Activated CD4-positive, alpha-beta T cell treated with anti-CD3 and anti-CD28 coated beads, Interleukin-2, amount 10 ng/mL, durations not matched to agents 24 days and 14 days (primary cell): ENCODE measurements at regions of chr4 and their contacts with region 1.

Region 1: DNA sequence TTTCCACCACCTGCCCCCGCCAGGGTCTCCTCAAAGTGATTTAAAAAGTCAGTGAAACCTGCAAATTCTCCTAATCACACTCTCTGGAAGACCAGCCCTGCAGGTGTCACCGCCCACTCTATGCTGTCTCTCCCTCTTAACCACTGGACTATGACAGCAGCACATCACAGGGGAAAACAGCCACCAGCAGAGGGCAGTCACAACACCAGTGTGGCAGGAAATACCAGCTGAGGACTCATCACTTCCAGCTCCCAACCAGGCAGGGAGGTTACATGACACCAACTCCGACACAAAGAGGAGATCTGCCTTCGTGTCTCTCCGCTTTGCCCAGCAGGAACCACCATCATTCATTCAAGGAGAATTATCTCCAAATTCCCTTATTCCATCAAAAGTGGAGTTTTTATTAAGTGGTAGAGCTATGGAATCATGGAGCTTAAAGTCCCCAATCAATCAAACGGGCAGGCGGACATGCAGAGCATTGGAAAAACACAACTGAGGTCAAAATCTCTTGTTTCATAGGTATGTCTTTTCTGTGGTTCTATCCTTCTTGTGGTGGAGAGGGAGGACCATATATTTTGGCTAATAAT is 91.3 kb downstream of the NSUN7 start:
- DNase-seq: peak; percentile 92
- H3K4me3 Mint-ChIP-seq: no peak overlapping the region
- H3K27ac Mint-ChIP-seq: no peak overlapping the region
- H3K4me1 Mint-ChIP-seq: peaks cover 5% of the 10 kb centered on the region
- H3K27me3 Mint-ChIP-seq: peaks cover 10% of the 10 kb centered on the region

Region 2: DNA sequence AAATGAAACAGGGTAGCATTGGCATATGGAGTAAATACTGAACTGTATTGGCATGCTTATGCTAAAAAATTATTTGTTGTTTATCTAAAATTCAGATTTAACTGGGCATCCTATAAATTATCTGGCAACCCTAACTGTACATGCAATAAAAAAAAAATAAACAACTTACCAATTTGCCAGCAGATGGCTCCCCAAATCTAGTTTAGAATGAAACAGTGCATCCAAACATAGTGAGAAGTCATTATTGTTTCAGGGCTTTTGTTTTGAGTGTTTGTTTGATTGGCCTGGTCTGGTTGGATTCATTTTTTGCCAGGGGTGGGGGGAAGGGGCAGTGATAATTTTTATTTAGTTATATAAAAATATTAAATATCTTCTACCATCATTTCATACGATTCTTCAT is 104.2 kb before region 1 on chr4:
- intact Hi-C with region 1: loop called (anchors 2 kb)
- DNase-seq: peak; percentile 65
- H3K4me3 Mint-ChIP-seq: no peak overlapping the region
- H3K27ac Mint-ChIP-seq: no peak overlapping the region
- H3K4me1 Mint-ChIP-seq: peaks cover 18% of the 10 kb centered on the region
- H3K27me3 Mint-ChIP-seq: peaks cover 8% of the 10 kb centered on the region

Region 3: GRCh38 chr4:40897557-40898203 is 56.6 kb after region 1 on chr4:
- intact Hi-C with region 1: loop called (anchors 2 kb)
- DNase-seq: peak; percentile 87
- H3K4me3 Mint-ChIP-seq: peak overlapping the region; percentile 76
- H3K27ac Mint-ChIP-seq: peak overlapping the region; percentile 68
- H3K4me1 Mint-ChIP-seq: peaks cover 4% of the 10 kb centered on the region
- H3K27me3 Mint-ChIP-seq: peaks cover 5% of the 10 kb centered on the region

Region 4: DNA sequence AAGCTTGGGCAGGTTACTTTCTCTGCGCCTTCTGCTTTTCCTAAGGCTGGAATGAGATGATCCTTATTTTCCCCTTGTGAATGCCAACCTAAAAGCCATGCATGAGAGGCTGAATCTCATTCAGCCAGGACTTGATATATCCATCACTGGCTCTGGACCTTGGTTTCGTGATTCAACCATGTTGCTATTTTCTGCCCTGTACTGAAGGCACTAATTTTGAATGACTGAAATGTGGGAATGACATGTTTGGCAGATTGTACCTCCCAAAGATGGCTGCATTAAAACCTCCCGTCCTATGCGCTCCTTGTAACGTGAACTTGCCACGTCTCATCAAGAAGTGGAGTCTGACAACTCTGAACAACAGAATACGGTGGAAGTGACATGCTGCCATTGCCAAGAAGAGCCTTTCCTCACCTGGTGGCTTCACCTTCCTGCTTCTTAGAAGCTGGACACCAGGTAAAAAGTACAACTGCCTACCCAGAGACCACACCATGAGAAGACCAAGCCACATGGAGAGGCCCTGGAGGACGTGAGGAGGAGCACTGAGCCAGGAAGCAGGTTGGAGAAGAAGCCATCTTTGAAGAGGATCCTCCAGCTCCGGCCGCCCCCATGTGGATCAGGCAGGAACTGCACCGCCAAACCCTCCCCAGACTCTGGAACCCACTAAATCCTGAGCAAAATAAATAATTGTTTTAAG is 83.2 kb after region 1 on chr4:
- intact Hi-C with region 1: loop called (anchors 1 kb)
- DNase-seq: peak; percentile 91
- H3K4me3 Mint-ChIP-seq: no peak overlapping the region
- H3K27ac Mint-ChIP-seq: peak overlapping the region; percentile 86
- H3K4me1 Mint-ChIP-seq: peaks cover 12% of the 10 kb centered on the region
- H3K27me3 Mint-ChIP-seq: peaks cover 24% of the 10 kb centered on the region